Activated CD4-positive, alpha-beta memory T cell treated with anti-CD3 and anti-CD28 coated beads for 36 hours (primary cell): ENCODE measurements at regions of chr6 and their contacts with region 1.

Region 1: DNA sequence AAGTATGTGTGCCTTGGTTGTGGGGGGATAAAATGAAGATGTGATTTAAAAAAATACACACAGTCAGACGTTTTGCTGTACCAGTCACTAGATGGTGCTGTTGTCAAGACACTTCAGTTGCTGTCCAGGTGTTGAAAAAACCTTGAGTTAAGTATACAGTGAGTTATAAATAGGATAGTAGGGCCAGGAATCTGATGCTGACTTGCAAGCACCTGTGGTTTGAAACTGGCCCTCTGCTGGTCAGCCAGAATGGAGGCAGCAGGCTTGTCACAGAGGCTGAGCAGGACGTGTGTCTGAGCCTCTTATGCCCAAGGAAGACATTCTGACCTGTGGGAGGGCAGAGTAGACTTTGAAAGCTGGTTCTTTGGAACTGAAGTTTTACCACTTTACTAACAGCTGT is 27.8 kb downstream of the RNF8 start:
- DNase-seq: peak; percentile 16
- H3K4me3 Mint-ChIP-seq: no peak overlapping the region
- H3K27ac Mint-ChIP-seq: no peak overlapping the region
- H3K4me1 Mint-ChIP-seq: no peaks in the 10 kb centered on the region
- H3K27me3 Mint-ChIP-seq: no peaks in the 10 kb centered on the region

Region 2: GRCh38 chr6:37362101-37362828 is 19.3 kb before region 1 on chr6:
- CTCF ChIA-PET with region 1: no interaction called
- POLR2A ChIA-PET with region 1: no interaction called
- intact Hi-C with region 1: no loop called
- DNase-seq: no peak
- H3K4me3 Mint-ChIP-seq: no peak overlapping the region
- H3K27ac Mint-ChIP-seq: no peak overlapping the region
- H3K4me1 Mint-ChIP-seq: no peaks in the 10 kb centered on the region
- H3K27me3 Mint-ChIP-seq: no peaks in the 10 kb centered on the region

Region 3: GRCh38 chr6:37432916-37433656 is 51.5 kb after region 1 on chr6 and contains the start of gene CMTR1:
- CTCF ChIA-PET with region 1: interaction called, 14 read pairs
- POLR2A ChIA-PET with region 1: no interaction called
- intact Hi-C with region 1: loop called (anchors 10 kb)
- DNase-seq: peak; percentile 98
- H3K4me3 Mint-ChIP-seq: peak within 1 kb of the TSS; percentile 91
- H3K27ac Mint-ChIP-seq: peak within 1 kb of the TSS; percentile 98
- H3K4me1 Mint-ChIP-seq: peaks cover 44% of the 10 kb centered on the region
- H3K27me3 Mint-ChIP-seq: peaks cover 2% of the 10 kb centered on the region
- total RNA-seq, gene CMTR1: 69.2 to 70.1 TPM

Region 4: GRCh38 chr6:37576336-37576813 is 194.8 kb after region 1 on chr6:
- CTCF ChIA-PET with region 1: no interaction called
- POLR2A ChIA-PET with region 1: no interaction called
- intact Hi-C with region 1: loop called (anchors 10 kb)
- DNase-seq: no peak
- H3K4me3 Mint-ChIP-seq: no peak overlapping the region
- H3K27ac Mint-ChIP-seq: no peak overlapping the region
- H3K4me1 Mint-ChIP-seq: no peaks in the 10 kb centered on the region
- H3K27me3 Mint-ChIP-seq: no peaks in the 10 kb centered on the region